ENCODE measurements at regions of chr2 and their contacts with region 1.

Region 1: GRCh38 chr2:68487773-68488355 is 20.5 kb downstream of the APLF start:
- DNase-seq: peak; percentile 50
- ATAC-seq: no peak
- H3K4me3 ChIP-seq: no peak overlapping the region
- H3K4me3 Mint-ChIP-seq: no peak overlapping the region
- H3K27ac ChIP-seq: no peak overlapping the region
- H3K27ac Mint-ChIP-seq: no peak overlapping the region
- H3K4me1 ChIP-seq: peaks cover 0 to 2% of the 10 kb centered on the region in 2 donors
- H3K4me1 Mint-ChIP-seq: peaks cover 4% of the 10 kb centered on the region
- H3K27me3 ChIP-seq: no peaks in the 10 kb centered on the region
- H3K27me3 Mint-ChIP-seq: no peaks in the 10 kb centered on the region
- CTCF ChIP-seq: peak; percentile 76

Region 2: GRCh38 chr2:68475576-68475975 is 12.3 kb before region 1 on chr2:
- CTCF ChIA-PET with region 1: interaction called, 16 read pairs
- POLR2A ChIA-PET with region 1: no interaction called
- intact Hi-C with region 1: no loop called
- DNase-seq: no peak
- ATAC-seq: no peak
- H3K4me3 ChIP-seq: no peak overlapping the region
- H3K4me3 Mint-ChIP-seq: no peak overlapping the region
- H3K27ac ChIP-seq: no peak overlapping the region
- H3K27ac Mint-ChIP-seq: no peak overlapping the region
- H3K4me1 ChIP-seq: no peaks in the 10 kb centered on the region
- H3K4me1 Mint-ChIP-seq: no peaks in the 10 kb centered on the region
- H3K27me3 ChIP-seq: no peaks in the 10 kb centered on the region
- H3K27me3 Mint-ChIP-seq: no peaks in the 10 kb centered on the region
- CTCF ChIP-seq: no peak

Region 3: GRCh38 chr2:68653538-68653982 is 165.7 kb after region 1 on chr2:
- CTCF ChIA-PET with region 1: no interaction called
- POLR2A ChIA-PET with region 1: no interaction called
- intact Hi-C with region 1: no loop called
- DNase-seq: no peak
- ATAC-seq: no peak
- H3K4me3 ChIP-seq: no peak overlapping the region
- H3K4me3 Mint-ChIP-seq: no peak overlapping the region
- H3K27ac ChIP-seq: no peak overlapping the region
- H3K27ac Mint-ChIP-seq: no peak overlapping the region
- H3K4me1 ChIP-seq: no peaks in the 10 kb centered on the region
- H3K4me1 Mint-ChIP-seq: peaks cover 4% of the 10 kb centered on the region
- H3K27me3 ChIP-seq: peaks cover 0 to 14% (median 5%) of the 10 kb centered on the region in 4 experiments
- H3K27me3 Mint-ChIP-seq: peaks cover 61% of the 10 kb centered on the region
- CTCF ChIP-seq: no peak